ENCODE measurements at regions of chr3 and their contacts with region 1.

Region 1: DNA sequence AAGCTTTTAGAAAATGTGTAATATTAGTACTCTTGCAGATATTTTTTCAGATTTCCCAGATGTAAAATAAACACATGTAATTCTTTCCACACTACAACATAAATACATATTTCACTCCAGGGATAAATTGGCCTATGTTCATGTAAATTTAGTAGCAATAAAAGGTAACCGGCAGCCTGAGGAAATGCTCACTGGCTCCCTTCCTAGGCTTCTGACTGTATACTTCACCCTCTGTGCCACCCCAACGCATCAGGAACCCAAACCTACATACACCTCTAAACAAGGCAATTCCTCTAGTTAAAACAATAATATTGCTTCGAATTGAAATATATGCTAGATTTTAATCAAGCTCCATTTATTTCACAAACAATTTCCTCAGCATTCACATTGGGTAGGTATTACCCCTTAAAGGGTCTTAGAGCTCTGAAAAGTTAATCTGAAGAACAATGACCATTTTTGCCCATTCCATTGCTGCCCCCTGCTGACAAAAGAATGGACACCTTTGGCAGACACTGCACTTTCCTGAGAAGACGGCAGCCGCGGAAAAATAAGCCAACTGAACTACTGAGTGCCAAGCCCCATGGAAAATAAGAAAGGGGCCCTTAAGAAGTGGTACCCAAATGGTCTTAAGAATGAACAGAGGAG is 212.5 kb downstream of the OSBPL10 start:
- DNase-seq: no peak
- H3K4me3 ChIP-seq: no peak overlapping the region
- H3K27me3 ChIP-seq: no peaks in the 10 kb centered on the region
- CTCF ChIP-seq: peak; percentile 71

Region 2: GRCh38 chr3:31614161-31614924 is 154.3 kb before region 1 on chr3:
- CTCF ChIA-PET with region 1: interaction called, 14 read pairs
- POLR2A ChIA-PET with region 1: no interaction called
- DNase-seq: no peak
- H3K4me3 ChIP-seq: no peak overlapping the region
- H3K27me3 ChIP-seq: no peaks in the 10 kb centered on the region
- CTCF ChIP-seq: no peak

Measured in BJ (cell line).